Activated T-helper 1 cell treated with anti-CD3 and anti-CD28 coated beads, Interleukin-12 subunit alpha, Interleukin-12 subunit beta, Interleukin-2, Interleukin-4 antibody, amounts not matched to agents 30 ng/mL and 10 ng/mL and 1 ng/mL, durations not matched to agents 14 hours and 24 hours and 36 hours (primary cell): ENCODE measurements at regions of chr16 and their contacts with region 1.

Region 1: DNA sequence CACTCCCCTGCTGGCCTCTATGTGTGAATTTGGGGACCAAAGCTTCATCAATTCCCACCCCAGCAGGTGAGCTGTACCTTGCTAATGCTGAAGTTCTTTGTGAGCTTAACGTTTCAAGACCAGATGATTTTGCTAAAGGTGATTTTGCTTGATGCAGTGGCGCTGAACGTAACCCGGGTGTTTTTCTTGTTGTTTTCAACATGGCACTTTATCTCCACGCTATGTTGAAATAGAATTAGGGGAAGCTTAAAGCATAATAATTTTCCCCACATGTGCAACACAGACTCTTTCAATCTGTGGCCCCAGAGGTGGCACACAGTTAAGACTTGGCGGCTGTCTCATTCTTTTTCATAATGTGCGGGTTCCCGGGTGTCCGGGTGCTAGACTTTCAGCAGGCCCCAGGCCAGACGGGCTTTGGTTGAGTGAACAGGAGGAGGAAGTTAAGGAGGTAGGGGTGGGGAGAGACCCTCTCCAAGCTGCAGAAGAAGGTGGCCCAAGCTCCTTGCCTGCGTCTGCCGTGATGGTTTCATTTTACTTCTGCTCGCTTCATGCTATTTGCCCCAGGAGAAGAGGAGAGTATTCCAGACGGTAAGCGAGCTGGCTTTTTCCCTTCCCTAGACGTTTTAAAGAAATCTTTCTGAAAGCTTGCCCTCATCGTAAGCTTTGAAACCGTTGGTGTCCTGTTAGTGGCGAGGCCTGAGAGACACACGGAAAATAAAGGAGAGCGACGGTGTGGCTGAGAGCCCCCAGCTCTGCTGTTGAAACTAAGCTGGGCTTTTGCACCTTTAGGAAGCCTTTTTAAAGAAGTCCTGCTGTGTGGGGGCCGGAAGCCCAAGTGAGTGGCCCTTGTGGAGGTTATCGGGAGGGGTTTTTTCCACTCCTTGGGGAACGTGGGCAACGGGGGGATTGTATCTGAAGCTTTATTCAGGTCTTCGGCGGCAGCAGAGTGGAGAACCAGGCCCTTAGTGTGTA is 4.2 kb downstream of the FOXC2 start:
- DNase-seq: no peak
- H3K4me3 Mint-ChIP-seq: no peak overlapping the region
- H3K27ac Mint-ChIP-seq: no peak overlapping the region
- H3K4me1 Mint-ChIP-seq: no peaks in the 10 kb centered on the region
- H3K27me3 Mint-ChIP-seq: peaks cover 61% of the 10 kb centered on the region

Region 2: DNA sequence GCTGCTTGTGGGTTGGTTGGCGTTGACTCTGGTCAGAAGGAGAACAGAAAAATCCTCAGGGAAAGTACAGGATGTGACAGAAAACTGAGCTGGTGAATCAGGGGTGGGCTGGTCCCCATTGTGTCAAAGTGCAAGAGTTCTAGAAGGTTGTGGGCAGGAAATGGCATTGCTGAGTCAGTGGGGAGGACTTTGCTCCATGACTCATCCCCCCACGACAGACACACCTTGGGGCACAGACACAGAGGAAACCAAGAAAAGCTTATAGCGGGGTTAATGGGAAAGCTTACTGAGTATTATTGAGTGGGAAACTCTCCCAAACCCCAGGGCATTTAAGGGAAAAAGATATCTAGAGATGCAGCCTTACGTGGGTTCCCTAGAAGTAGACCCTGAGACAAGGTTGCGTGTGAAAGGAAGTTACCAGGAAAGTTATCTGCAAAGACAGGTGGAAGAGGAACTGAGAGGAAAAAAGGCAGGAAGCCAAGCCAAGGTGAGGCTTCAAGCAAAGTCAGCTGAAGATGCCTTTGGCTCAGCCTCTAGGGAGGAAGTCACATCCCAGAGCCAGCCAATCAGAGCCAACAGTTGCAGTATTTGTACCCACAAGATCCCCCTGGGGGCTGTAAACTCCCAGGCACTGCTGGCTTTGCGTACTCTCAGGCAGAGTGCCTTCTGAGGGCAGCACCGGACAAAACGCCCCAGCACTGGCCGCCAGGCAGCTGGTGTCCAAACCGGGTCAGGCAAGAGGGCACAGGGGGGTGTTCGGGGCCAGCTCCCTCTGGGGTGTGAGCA is 93.9 kb after region 1 on chr16:
- intact Hi-C with region 1: loop called (anchors 5 kb)
- DNase-seq: peak; percentile 60
- H3K4me3 Mint-ChIP-seq: peak overlapping the region; percentile 41
- H3K27ac Mint-ChIP-seq: peak overlapping the region; percentile 92
- H3K4me1 Mint-ChIP-seq: peaks cover 35% of the 10 kb centered on the region
- H3K27me3 Mint-ChIP-seq: no peaks in the 10 kb centered on the region

Region 3: GRCh38 chr16:87145181-87146176 is 574.6 kb after region 1 on chr16:
- intact Hi-C with region 1: no loop called
- DNase-seq: no peak
- H3K4me3 Mint-ChIP-seq: no peak overlapping the region
- H3K27ac Mint-ChIP-seq: no peak overlapping the region
- H3K4me1 Mint-ChIP-seq: no peaks in the 10 kb centered on the region
- H3K27me3 Mint-ChIP-seq: no peaks in the 10 kb centered on the region